Common myeloid progenitor, CD34-positive (primary cell): ENCODE measurements at regions of chr19 and their contacts with region 1.

Region 1: DNA sequence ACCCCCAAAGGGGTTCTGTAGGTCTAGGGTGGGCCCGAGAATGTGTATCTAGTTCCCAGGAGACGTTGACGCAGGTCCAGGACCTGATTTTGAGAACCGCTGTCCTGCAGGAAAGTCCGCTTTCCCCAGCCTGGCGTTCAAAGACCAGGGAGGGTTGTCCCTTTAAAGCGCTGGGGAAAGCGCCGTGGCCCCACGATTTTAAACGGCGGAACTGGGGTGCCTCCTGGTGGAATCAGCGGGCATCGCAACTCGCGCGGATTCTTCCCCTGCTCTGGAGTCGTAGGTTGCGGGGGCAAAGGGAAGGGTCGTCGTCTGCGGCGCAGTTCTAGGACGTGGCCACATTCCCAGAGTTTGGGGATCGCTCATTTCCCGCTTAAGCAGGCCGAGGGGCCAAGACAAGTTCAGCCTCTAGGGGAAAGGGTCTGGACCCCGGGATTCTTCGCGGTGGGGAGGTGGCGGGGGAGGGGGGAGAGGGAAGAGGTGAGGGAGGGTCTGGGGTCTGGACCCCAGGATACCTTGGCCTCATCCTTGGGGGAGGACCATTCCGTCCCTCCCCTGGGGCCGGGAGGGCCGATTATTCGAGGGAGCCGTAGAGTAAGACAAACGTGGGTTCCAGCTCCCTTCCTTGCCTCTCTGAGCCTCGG is 7.7 kb downstream of the PNMA8B start:
- DNase-seq: peak; percentile 60 to 74 (median 66)
- H3K4me3 ChIP-seq: no peak overlapping the region
- H3K27ac ChIP-seq: no peak overlapping the region
- H3K4me1 ChIP-seq: peaks cover 0 to 26% (median 16%) of the 10 kb centered on the region in 4 experiments
- H3K27me3 ChIP-seq: peaks cover 5 to 69% (median 48%) of the 10 kb centered on the region in 5 experiments

Region 2: GRCh38 chr19:46392243-46392801 is 95.6 kb before region 1 on chr19:
- CTCF ChIA-PET with region 1: interaction called, 14 read pairs
- POLR2A ChIA-PET with region 1: interaction called, 4 read pairs
- DNase-seq: no peak
- H3K4me3 ChIP-seq: no peak overlapping the region
- H3K27ac ChIP-seq: no peak overlapping the region
- H3K4me1 ChIP-seq: no peaks in the 10 kb centered on the region
- H3K27me3 ChIP-seq: no peaks in the 10 kb centered on the region

Region 3: GRCh38 chr19:46404055-46404752 is 83.7 kb before region 1 on chr19:
- CTCF ChIA-PET with region 1: interaction called, 31 read pairs
- POLR2A ChIA-PET with region 1: no interaction called
- DNase-seq: peak in 2 of 3 donors; percentile 68 to 75
- H3K4me3 ChIP-seq: peak overlapping the region in 5 of 7 experiments; percentile 29 to 59 (median 44)
- H3K27ac ChIP-seq: no peak overlapping the region
- H3K4me1 ChIP-seq: peaks cover 0 to 22% (median 18%) of the 10 kb centered on the region in 4 experiments
- H3K27me3 ChIP-seq: peaks cover 3 to 64% (median 31%) of the 10 kb centered on the region in 5 experiments

Region 4: DNA sequence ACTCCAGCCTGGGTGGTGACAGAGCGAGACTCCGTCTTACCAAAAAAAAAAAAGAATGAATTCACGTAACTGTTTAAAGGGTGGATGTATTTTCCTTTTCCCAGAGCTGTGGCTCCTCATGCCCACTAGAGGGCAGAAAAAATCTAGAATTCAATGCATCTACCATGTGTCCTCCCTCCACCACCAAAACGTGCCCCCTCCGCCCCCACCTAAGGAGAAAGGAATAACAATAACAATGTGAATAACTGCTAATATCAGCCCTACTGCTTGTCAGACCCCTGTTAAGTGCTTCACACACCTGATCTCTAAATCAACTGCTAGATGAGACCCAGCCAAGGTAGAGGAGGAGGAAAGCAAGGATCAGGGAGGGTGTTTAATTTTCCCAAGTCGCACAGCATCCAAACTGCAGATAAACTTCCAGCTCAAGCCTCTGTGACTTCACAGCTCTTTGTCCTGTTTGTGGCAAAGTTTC is 28.0 kb after region 1 on chr19:
- CTCF ChIA-PET with region 1: interaction called, 13 read pairs
- POLR2A ChIA-PET with region 1: interaction called, 4 read pairs
- DNase-seq: peak; percentile 58 to 78 (median 71)
- H3K4me3 ChIP-seq: no peak overlapping the region
- H3K27ac ChIP-seq: no peak overlapping the region
- H3K4me1 ChIP-seq: peaks cover 1 to 15% (median 9%) of the 10 kb centered on the region in 4 experiments
- H3K27me3 ChIP-seq: peaks cover 0 to 21% (median 0%) of the 10 kb centered on the region in 5 experiments